Left colon (tissue), 2 donors: ENCODE measurements at regions of chr11 and their contacts with region 1.

Region 1: GRCh38 chr11:125345421-125346178 is 150.5 kb downstream of the FEZ1 start:
- DNase-seq: peak; percentile 40 to 67
- ATAC-seq: peak; percentile 56

Region 2: GRCh38 chr11:125164422-125165110 is 181.0 kb before region 1 on chr11 and contains the start of gene PKNOX2:
- intact Hi-C with region 1: loop called in 1 of 2 experiments (anchors 5 kb)
- DNase-seq: peak; percentile 44 to 70
- ATAC-seq: peak; percentile 78
- total RNA-seq, gene PKNOX2: 0.49 to 1.5 TPM

Region 3: GRCh38 chr11:125239585-125240560 is 105.7 kb before region 1 on chr11:
- intact Hi-C with region 1: no loop called
- DNase-seq: no peak
- ATAC-seq: no peak

Region 4: GRCh38 chr11:125433454-125434121 is 88.0 kb after region 1 on chr11:
- intact Hi-C with region 1: no loop called
- DNase-seq: peak in 1 of 2 donors; percentile 26
- ATAC-seq: peak; percentile 55